ENCODE measurements at regions of chr12 and their contacts with region 1.

Region 1: GRCh38 chr12:68686595-68687521 is at the start of gene NUP107:
- DNase-seq: peak; percentile 98
- ATAC-seq: peak; percentile 95
- H3K4me3 ChIP-seq: peak within 1 kb of the TSS; percentile 71 to 100 (median 81)
- H3K4me3 Mint-ChIP-seq: peak within 1 kb of the TSS; percentile 96
- H3K27ac ChIP-seq: peak within 1 kb of the TSS; percentile 70 to 77
- H3K27ac Mint-ChIP-seq: peak within 1 kb of the TSS; percentile 98
- H3K4me1 ChIP-seq: peaks cover 17 to 20% of the 10 kb centered on the region in 2 donors
- H3K4me1 Mint-ChIP-seq: peaks cover 28% of the 10 kb centered on the region
- H3K27me3 ChIP-seq: no peaks in the 10 kb centered on the region
- H3K27me3 Mint-ChIP-seq: no peaks in the 10 kb centered on the region
- CTCF ChIP-seq: no peak
- total RNA-seq, gene NUP107: 77.3 and 88.9 TPM in 2 replicates

Region 2: DNA sequence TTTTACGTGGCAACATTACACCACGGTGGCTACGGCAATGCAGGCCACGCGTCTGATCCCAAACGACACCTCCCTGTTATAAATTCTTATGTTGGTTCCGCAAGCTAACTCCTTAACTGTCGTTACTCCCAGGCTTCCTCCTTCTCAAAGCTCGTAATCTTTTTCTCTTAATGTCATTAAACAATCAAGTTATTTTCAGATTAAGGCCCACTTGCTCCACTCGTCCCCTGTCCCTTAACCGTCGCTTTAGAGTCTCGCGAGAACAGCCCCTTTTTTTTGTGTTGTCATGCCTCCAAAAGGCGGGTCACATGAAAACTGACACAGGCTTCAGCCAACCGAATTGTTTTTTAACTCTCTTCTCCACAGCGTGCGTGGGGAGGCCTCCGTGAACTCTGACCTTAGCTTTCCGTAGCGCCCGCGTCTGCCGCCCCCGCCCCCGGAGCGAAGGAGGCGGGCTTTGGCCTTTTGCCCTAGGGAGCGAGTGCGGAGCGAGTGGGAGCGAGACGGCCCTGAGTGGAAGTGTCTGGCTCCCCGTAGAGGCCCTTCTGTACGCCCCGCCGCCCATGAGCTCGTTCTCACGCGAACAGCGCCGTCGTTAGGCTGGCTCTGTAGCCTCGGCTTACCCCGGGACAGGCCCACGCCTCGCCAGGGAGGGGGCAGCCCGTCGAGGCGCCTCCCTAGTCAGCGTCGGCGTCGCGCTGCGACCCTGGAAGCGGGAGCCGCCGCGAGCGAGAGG is 1417.8 kb before region 1 on chr12 and contains the start of gene CAND1:
- CTCF ChIA-PET with region 1: no interaction called
- POLR2A ChIA-PET with region 1: no interaction called
- intact Hi-C with region 1: loop called (anchors 2 kb)
- DNase-seq: peak; percentile 99
- ATAC-seq: peak; percentile 78
- H3K4me3 ChIP-seq: peak within 1 kb of the TSS; percentile 67 to 94 (median 80)
- H3K4me3 Mint-ChIP-seq: peak within 1 kb of the TSS; percentile 86
- H3K27ac ChIP-seq: peak within 1 kb of the TSS; percentile 90 to 94
- H3K27ac Mint-ChIP-seq: peak within 1 kb of the TSS; percentile 91
- H3K4me1 ChIP-seq: peaks cover 24 to 25% of the 10 kb centered on the region in 2 donors
- H3K4me1 Mint-ChIP-seq: peaks cover 34% of the 10 kb centered on the region
- H3K27me3 ChIP-seq: no peaks in the 10 kb centered on the region
- H3K27me3 Mint-ChIP-seq: no peaks in the 10 kb centered on the region
- CTCF ChIP-seq: no peak
- total RNA-seq, gene CAND1: 108 and 110 TPM in 2 replicates

Region 3: DNA sequence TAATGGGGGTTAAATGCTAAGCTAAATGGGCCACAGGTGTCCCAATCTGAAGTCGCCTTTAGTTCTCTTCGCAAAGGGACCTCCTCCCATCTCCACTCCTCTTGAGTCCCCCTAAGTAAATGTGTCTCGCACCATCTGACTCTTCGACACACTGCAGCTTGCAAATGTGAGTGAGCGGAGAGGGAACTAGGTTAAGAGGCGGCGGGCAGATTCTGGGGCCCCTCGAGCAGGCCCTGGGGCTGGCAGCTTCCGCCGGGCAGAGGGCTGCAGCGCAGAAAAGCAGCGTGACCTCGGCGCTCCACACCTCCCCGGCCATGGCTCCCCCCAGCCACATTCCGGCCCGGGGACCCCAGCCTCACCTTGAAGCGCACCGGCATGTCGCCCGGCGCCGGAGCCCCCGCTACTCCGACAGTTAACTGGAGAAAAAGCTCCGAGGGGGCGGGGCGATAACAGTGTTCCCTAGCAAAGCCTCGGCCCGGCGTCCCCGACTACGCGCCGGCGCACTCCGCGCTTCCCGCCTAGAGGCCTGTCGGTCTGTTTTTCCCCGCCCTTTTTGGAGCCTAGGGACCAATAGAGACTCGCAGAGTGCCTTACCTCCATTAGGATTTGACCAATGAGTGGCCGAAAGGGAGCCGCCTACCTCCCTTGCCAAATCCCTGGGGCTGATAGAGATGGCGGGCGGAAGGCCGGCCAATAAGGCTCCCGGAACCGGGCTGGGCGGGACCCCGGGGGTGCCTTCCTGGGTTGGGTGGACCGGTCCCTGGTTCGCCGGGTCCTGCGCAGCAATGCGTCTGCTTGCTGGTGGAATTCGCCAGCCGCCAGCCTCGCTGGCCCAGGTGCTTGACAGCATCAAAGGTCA is 354.8 kb before region 1 on chr12 and contains the start of gene MDM1:
- CTCF ChIA-PET with region 1: interaction called, 5 read pairs
- POLR2A ChIA-PET with region 1: interaction called, 3 read pairs
- intact Hi-C with region 1: loop called (anchors 1 kb)
- DNase-seq: peak; percentile 97
- ATAC-seq: peak; percentile 97
- H3K4me3 ChIP-seq: peak within 1 kb of the TSS; percentile 79 to 85 (median 82)
- H3K4me3 Mint-ChIP-seq: peak within 1 kb of the TSS; percentile 94
- H3K27ac ChIP-seq: peak within 1 kb of the TSS; percentile 55 to 78
- H3K27ac Mint-ChIP-seq: peak within 1 kb of the TSS; percentile 90
- H3K4me1 ChIP-seq: peaks cover 12 to 14% of the 10 kb centered on the region in 2 donors
- H3K4me1 Mint-ChIP-seq: peaks cover 40% of the 10 kb centered on the region
- H3K27me3 ChIP-seq: no peaks in the 10 kb centered on the region
- H3K27me3 Mint-ChIP-seq: no peaks in the 10 kb centered on the region
- CTCF ChIP-seq: no peak
- total RNA-seq, gene MDM1: 38.3 and 38.9 TPM in 2 replicates

Region 4: DNA sequence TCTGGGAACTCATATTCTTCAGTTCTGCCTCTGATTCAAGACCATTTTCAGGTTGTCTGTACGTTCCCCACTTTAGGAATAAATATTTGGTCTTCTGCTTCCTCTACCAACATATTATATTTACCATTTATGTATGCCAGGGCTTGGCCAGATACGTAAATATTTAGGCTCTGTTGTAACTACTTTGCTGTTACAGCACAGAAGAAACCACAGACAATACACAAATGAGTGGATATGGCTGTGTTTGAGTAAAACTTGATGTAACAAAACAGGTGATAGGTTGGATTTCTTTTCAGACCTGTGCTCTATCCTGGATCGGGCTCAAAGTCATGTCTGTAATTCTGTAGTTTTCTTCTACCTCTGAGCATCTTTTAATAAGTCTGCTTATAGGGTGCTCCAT is 38.7 kb before region 1 on chr12:
- CTCF ChIA-PET with region 1: no interaction called
- POLR2A ChIA-PET with region 1: interaction called, 5 read pairs
- intact Hi-C with region 1: loop called (anchors 5 kb)
- DNase-seq: no peak
- ATAC-seq: no peak
- H3K4me3 ChIP-seq: no peak overlapping the region
- H3K4me3 Mint-ChIP-seq: no peak overlapping the region
- H3K27ac ChIP-seq: peak overlapping the region in 1 of 2 donors; percentile 41
- H3K27ac Mint-ChIP-seq: no peak overlapping the region
- H3K4me1 ChIP-seq: no peaks in the 10 kb centered on the region
- H3K4me1 Mint-ChIP-seq: peaks cover 34% of the 10 kb centered on the region
- H3K27me3 ChIP-seq: no peaks in the 10 kb centered on the region
- H3K27me3 Mint-ChIP-seq: no peaks in the 10 kb centered on the region
- CTCF ChIP-seq: no peak

Region 5: GRCh38 chr12:68745904-68746571 is 59.2 kb after region 1 on chr12 and contains the start of gene SLC35E3:
- CTCF ChIA-PET with region 1: no interaction called
- POLR2A ChIA-PET with region 1: no interaction called
- intact Hi-C with region 1: loop called (anchors 1 kb)
- DNase-seq: peak; percentile 93
- ATAC-seq: peak; percentile 97
- H3K4me3 ChIP-seq: peak within 1 kb of the TSS; percentile 75 to 96 (median 89)
- H3K4me3 Mint-ChIP-seq: peak within 1 kb of the TSS; percentile 97
- H3K27ac ChIP-seq: peak within 1 kb of the TSS; percentile 71 to 89
- H3K27ac Mint-ChIP-seq: peak within 1 kb of the TSS; percentile 95
- H3K4me1 ChIP-seq: peaks cover 21 to 26% of the 10 kb centered on the region in 2 donors
- H3K4me1 Mint-ChIP-seq: peaks cover 53% of the 10 kb centered on the region
- H3K27me3 ChIP-seq: no peaks in the 10 kb centered on the region
- H3K27me3 Mint-ChIP-seq: no peaks in the 10 kb centered on the region
- CTCF ChIP-seq: no peak
- total RNA-seq, gene SLC35E3: 15.1 TPM in 2 replicates

Region 6: GRCh38 chr12:69585189-69586062 is 898.6 kb after region 1 on chr12 and contains the start of gene CCT2:
- CTCF ChIA-PET with region 1: no interaction called
- POLR2A ChIA-PET with region 1: no interaction called
- intact Hi-C with region 1: loop called (anchors 2 kb)
- DNase-seq: peak; percentile 98
- ATAC-seq: peak; percentile 93
- H3K4me3 ChIP-seq: peak within 1 kb of the TSS; percentile 83 to 96 (median 90)
- H3K4me3 Mint-ChIP-seq: peak within 1 kb of the TSS; percentile 97
- H3K27ac ChIP-seq: peak within 1 kb of the TSS; percentile 91 to 97
- H3K27ac Mint-ChIP-seq: peak within 1 kb of the TSS; percentile 96
- H3K4me1 ChIP-seq: peaks cover 6 to 11% of the 10 kb centered on the region in 2 donors
- H3K4me1 Mint-ChIP-seq: peaks cover 12% of the 10 kb centered on the region
- H3K27me3 ChIP-seq: no peaks in the 10 kb centered on the region
- H3K27me3 Mint-ChIP-seq: no peaks in the 10 kb centered on the region
- CTCF ChIP-seq: peak; percentile 60
- total RNA-seq, gene CCT2: 125 TPM in 2 replicates